ENCODE measurements at regions of chr14 and their contacts with region 1.

Region 1: GRCh38 chr14:65412032-65412846 is at the start of gene FUT8:
- DNase-seq: peak; percentile 94
- H3K4me3 Mint-ChIP-seq: peak within 1 kb of the TSS; percentile 92
- H3K27ac Mint-ChIP-seq: peak within 1 kb of the TSS; percentile 95
- H3K4me1 Mint-ChIP-seq: peaks cover 32% of the 10 kb centered on the region
- H3K27me3 Mint-ChIP-seq: no peaks in the 10 kb centered on the region
- total RNA-seq, gene FUT8: 34.6 to 38.7 TPM

Region 2: DNA sequence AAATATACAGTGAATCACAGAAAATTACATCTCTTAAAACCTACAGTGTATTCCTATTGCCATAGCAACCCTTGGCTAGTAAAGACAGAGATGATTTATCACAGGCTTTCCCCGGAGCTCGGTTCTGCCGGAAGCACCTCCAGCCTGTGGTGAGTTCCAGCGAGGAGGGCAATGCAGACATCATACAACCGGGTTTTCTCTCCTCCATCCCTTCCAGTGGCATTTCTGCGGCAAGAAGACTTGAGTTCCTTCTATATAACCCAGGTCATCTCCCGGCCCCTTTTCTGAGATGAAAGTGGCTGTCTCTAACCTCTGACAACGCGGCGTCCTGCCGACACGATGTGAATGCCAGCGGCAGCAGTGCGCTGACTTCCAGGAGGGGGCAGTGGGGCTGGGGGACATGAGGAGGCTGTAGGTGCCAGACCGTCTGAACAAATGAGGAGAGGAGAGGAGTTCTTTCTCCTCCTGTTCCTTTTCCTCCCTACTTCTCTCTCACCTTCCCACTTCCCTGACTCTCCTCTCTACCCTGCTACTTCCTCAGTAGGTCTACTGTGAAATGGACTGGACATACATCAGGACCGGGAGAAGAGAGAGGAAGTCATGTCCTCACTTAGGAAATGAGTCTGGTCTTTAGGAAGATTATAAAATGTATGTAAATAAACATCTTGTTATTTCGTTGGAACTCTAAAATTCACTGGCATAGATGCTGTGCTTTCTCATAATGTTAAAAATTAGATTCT is 241.3 kb before region 1 on chr14:
- CTCF ChIA-PET with region 1: interaction called, 21 read pairs
- intact Hi-C with region 1: no loop called
- DNase-seq: peak; percentile 78
- H3K4me3 Mint-ChIP-seq: peak overlapping the region; percentile 67
- H3K27ac Mint-ChIP-seq: no peak overlapping the region
- H3K4me1 Mint-ChIP-seq: peaks cover 15% of the 10 kb centered on the region
- H3K27me3 Mint-ChIP-seq: peaks cover 4% of the 10 kb centered on the region

Region 3: DNA sequence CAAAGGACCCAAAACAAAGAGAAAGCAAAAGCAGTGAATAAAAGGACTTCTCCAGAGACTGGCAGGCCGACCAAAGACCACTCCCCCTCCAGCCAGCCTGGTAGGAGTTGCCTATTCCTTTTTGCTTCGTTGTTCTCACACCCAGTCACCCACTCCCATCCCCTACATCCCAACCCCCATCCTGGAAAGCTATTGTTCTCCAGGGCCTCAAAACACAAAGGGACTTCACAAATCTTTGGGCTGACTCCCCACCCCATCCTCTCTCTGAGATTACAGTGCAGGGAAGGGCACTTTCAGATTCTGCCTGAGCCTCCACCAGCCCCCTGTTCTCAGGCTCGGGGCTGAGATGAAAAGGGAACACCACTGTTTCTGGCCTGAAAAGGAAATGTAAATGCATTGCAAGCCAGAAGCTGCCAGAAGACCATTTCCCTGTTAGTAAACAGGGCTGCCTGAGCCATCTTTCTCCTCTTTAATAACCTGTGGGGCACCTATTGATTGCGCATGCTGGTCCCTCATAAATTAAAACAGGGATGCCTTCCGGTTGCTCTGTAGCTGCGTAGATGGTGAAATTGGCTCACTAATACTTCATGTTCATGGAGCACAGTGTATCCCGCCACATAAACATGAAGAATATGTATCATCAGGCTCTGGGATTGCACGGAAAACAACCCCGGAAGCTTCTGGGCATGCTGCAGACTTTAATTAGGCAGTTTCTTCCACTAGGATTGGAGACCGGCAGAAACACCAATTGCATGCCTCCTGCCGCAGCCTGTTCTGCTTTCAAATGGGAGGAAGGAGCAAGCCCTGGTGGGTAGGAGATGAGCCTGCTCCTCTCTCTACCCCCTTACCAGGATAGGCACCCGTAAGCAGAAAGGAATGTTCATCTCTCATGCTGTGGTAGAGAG is 130.0 kb before region 1 on chr14:
- CTCF ChIA-PET with region 1: interaction called, 12 read pairs
- intact Hi-C with region 1: loop called (anchors 1 kb)
- DNase-seq: peak; percentile 22
- H3K4me3 Mint-ChIP-seq: peak overlapping the region; percentile 54
- H3K27ac Mint-ChIP-seq: peak overlapping the region; percentile 73
- H3K4me1 Mint-ChIP-seq: peaks cover 30% of the 10 kb centered on the region
- H3K27me3 Mint-ChIP-seq: no peaks in the 10 kb centered on the region

Region 4: GRCh38 chr14:65428691-65429090 is 16.5 kb after region 1 on chr14:
- CTCF ChIA-PET with region 1: interaction called, 15 read pairs
- intact Hi-C with region 1: no loop called
- DNase-seq: no peak
- H3K4me3 Mint-ChIP-seq: no peak overlapping the region
- H3K27ac Mint-ChIP-seq: no peak overlapping the region
- H3K4me1 Mint-ChIP-seq: peaks cover 28% of the 10 kb centered on the region
- H3K27me3 Mint-ChIP-seq: no peaks in the 10 kb centered on the region

Region 5: GRCh38 chr14:65704850-65705249 is 292.6 kb after region 1 on chr14:
- CTCF ChIA-PET with region 1: no interaction called
- intact Hi-C with region 1: loop called (anchors 1 kb)
- DNase-seq: peak; percentile 75
- H3K4me3 Mint-ChIP-seq: no peak overlapping the region
- H3K27ac Mint-ChIP-seq: peak overlapping the region; percentile 72
- H3K4me1 Mint-ChIP-seq: peaks cover 12% of the 10 kb centered on the region
- H3K27me3 Mint-ChIP-seq: no peaks in the 10 kb centered on the region

Region 6: GRCh38 chr14:66395300-66395699 is 983.1 kb after region 1 on chr14:
- CTCF ChIA-PET with region 1: no interaction called
- intact Hi-C with region 1: loop called (anchors 2 kb)
- DNase-seq: peak; percentile 62
- H3K4me3 Mint-ChIP-seq: no peak overlapping the region
- H3K27ac Mint-ChIP-seq: no peak overlapping the region
- H3K4me1 Mint-ChIP-seq: peaks cover 12% of the 10 kb centered on the region
- H3K27me3 Mint-ChIP-seq: no peaks in the 10 kb centered on the region

Measured in activated naive CD4-positive, alpha-beta T cell treated with anti-CD3 and anti-CD28 coated beads for 36 hours (primary cell).